Activated CD8-positive, alpha-beta T cell treated with anti-CD3 and anti-CD28 coated beads for 36 hours (primary cell): ENCODE measurements at regions of chr17 and their contacts with region 1.

Region 1: GRCh38 chr17:38351412-38352222 is at the start of gene SOCS7:
- DNase-seq: peak; percentile 94
- ATAC-seq: peak; percentile 92
- H3K4me3 Mint-ChIP-seq: peak within 1 kb of the TSS; percentile 80
- H3K27ac Mint-ChIP-seq: peak within 1 kb of the TSS; percentile 97
- H3K4me1 Mint-ChIP-seq: peaks cover 40% of the 10 kb centered on the region
- H3K27me3 Mint-ChIP-seq: no peaks in the 10 kb centered on the region
- CTCF ChIP-seq: no peak
- total RNA-seq, gene SOCS7: 18.0 to 18.9 TPM

Region 2: DNA sequence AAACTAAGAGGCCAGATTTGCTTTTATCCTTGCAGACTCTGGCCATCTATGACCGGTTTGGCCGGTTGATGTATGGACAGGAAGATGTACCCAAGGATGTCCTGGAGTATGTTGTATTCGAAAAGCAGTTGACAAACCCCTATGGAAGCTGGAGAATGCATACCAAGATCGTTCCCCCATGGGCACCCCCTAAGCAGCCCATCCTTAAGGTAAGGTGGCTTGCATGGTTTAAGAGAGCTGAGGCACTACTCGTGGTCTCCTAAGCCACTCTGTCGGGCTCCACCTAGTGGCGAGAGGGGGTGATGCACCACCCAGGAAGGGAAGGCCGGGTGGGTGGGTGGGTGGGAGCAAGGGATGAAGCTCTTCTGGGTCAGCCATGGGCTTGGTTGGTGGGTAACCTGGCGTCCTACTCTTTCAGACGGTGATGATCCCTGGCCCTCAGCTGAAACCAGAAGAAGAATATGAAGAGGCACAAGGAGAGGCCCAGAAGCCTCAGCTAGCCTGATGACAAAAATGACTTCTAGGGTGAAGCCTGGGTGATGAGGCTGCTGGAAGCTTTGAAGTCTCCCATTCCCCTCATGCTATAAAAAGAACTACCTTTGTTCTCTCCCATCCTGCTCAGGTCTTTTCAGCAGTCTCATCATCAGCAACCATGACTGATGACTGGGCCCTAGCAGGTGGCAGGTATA is 29.4 kb before region 1 on chr17:
- CTCF ChIA-PET with region 1: interaction called, 26 read pairs
- POLR2A ChIA-PET with region 1: interaction called, 3 read pairs
- intact Hi-C with region 1: no loop called
- DNase-seq: peak; percentile 83
- ATAC-seq: peak; percentile 95
- H3K4me3 Mint-ChIP-seq: no peak overlapping the region
- H3K27ac Mint-ChIP-seq: no peak overlapping the region
- H3K4me1 Mint-ChIP-seq: peaks cover 7% of the 10 kb centered on the region
- H3K27me3 Mint-ChIP-seq: no peaks in the 10 kb centered on the region
- CTCF ChIP-seq: peak; percentile 71

Region 3: GRCh38 chr17:38341035-38341721 is 10.4 kb before region 1 on chr17:
- CTCF ChIA-PET with region 1: interaction called, 28 read pairs
- POLR2A ChIA-PET with region 1: interaction called, 5 read pairs
- intact Hi-C with region 1: no loop called
- DNase-seq: no peak
- ATAC-seq: no peak
- H3K4me3 Mint-ChIP-seq: no peak overlapping the region
- H3K27ac Mint-ChIP-seq: no peak overlapping the region
- H3K4me1 Mint-ChIP-seq: no peaks in the 10 kb centered on the region
- H3K27me3 Mint-ChIP-seq: no peaks in the 10 kb centered on the region
- CTCF ChIP-seq: no peak

Region 4: DNA sequence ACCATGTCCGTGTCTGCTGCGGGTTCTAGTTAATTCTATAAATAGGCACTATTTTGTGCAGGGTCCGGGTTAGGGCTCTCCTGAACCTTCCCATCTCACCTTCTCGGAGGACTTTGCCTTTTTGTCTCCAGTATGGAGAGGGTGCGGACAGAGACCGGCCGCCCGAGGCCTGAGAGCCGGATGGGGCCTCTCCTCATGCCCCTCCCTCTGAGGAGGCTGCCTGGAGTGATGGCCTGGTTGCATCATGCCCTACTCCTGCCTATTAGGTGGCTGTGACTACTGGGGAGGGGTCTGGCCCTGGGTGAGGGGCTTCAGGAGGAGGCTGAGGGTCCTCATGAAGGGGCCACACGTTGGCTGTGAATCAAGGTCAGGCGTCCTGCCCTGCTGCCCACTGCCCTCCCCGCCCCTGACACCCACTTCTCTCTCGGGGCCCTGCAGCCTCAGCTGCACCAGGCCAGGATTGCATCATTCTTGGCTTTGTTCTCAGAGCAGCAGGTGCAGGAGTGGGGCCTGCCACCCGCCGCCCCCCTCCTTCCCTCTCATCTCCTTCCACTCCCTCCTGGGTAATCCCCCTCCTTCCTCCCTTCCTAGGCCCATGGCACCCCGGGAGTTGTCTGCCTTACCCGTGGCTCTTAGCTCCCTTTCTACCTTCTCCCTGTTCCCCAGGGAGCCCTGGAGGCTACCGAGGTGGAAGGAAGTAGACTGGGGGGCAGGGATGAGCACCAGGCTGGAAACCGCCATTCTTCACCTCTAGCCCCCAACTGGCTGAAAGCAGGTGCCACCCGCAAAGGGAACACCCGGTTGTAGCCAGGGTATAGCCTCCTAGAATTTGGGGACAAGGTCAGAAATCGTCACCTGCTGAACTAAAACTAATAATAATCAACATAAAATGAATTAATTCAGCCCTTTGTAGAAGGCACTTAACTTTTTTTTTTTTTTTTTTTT is 63.9 kb after region 1 on chr17:
- CTCF ChIA-PET with region 1: interaction called, 203 read pairs
- POLR2A ChIA-PET with region 1: interaction called, 3 read pairs
- intact Hi-C with region 1: loop called (anchors 2 kb)
- DNase-seq: peak; percentile 67
- ATAC-seq: peak; percentile 71
- H3K4me3 Mint-ChIP-seq: peak overlapping the region; percentile 72
- H3K27ac Mint-ChIP-seq: peak overlapping the region; percentile 93
- H3K4me1 Mint-ChIP-seq: peaks cover 17% of the 10 kb centered on the region
- H3K27me3 Mint-ChIP-seq: peaks cover 34% of the 10 kb centered on the region
- CTCF ChIP-seq: no peak

Region 5: DNA sequence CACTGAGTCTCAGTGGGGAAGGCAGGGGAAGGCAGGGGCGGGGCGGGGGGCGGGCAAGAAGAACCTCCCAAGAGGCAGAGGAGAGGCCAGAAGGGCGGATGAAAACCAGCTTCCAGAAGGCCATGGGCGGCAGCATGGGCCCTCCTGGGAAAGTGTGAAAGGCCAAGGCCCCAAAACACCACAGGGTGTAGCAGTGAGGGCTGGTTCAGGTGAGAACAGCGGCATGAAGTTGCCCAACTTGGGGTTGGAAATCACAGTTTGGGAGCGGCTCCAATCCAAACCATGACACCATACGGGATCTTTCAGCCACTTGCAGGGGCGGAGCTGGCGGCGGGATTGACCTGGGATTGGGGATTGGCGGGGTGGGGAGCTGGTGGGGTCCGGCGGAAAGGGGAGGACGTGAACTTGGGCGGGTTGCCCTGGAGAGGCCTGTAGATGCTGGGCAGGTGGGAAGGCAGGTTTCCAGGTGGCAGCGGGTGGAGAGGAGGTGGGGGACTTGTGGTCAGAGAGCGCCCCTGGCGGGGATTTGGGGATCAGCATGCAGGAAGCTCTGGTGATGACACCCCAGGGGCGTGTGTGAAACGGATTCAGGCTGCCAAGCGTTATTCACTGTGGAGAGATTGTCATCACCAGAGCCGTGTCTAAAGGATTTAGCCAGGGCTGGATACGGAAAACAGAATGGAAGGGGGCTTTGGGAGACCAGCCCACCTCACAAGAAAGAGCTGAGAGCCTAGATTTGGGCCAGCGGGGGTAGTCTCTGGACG is 157.6 kb after region 1 on chr17:
- CTCF ChIA-PET with region 1: interaction called, 11 read pairs
- POLR2A ChIA-PET with region 1: no interaction called
- intact Hi-C with region 1: no loop called
- DNase-seq: peak; percentile 92
- ATAC-seq: peak; percentile 97
- H3K4me3 Mint-ChIP-seq: peak overlapping the region; percentile 69
- H3K27ac Mint-ChIP-seq: no peak overlapping the region
- H3K4me1 Mint-ChIP-seq: peaks cover 10% of the 10 kb centered on the region
- H3K27me3 Mint-ChIP-seq: peaks cover 30% of the 10 kb centered on the region
- CTCF ChIP-seq: peak; percentile 73